Thyroid gland (tissue), 4 donors: ENCODE measurements at regions of chr13 and their contacts with region 1.

Region 1: GRCh38 chr13:41075034-41075433 is 13.7 kb downstream of the WBP4 start:
- DNase-seq: no peak
- H3K4me3 ChIP-seq: no peak overlapping the region
- H3K27ac ChIP-seq: no peak overlapping the region
- H3K4me1 ChIP-seq: no peaks in the 10 kb centered on the region
- H3K27me3 ChIP-seq: no peaks in the 10 kb centered on the region
- CTCF ChIP-seq: peak in 5 of 6 experiments; percentile 18 to 55 (median 46)
- POLR2A ChIP-seq: no peak

Region 2: DNA sequence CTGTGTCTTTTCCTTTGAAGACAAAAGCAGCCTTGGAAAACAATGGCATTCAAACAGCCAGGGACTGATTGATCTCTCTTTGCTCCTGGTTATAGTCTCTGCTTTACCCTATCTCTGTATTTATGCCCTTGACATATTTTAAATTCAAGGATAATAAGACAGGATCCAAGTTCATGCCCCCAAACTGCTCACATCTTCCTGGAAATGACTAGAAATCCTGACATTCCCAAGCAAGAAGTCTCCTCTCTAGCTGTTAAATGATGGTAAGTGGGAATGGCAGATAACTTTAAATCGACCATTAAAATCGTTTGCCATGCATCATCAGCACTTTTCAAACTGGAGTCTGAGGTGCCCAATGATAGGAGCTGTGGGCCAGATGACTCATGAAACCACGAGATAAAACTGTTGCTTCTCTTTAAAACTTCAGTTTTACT is 844.2 kb before region 1 on chr13:
- intact Hi-C with region 1: no loop called
- DNase-seq: no peak
- H3K4me3 ChIP-seq: no peak overlapping the region
- H3K27ac ChIP-seq: peak overlapping the region in 1 of 3 donors; percentile 4
- H3K4me1 ChIP-seq: peaks cover 0 to 9% of the 10 kb centered on the region in 2 donors
- H3K27me3 ChIP-seq: no peaks in the 10 kb centered on the region
- CTCF ChIP-seq: no peak
- POLR2A ChIP-seq: no peak

Region 3: GRCh38 chr13:40536443-40537113 is 538.5 kb before region 1 on chr13:
- intact Hi-C with region 1: no loop called
- DNase-seq: peak; percentile 48 to 74
- H3K4me3 ChIP-seq: no peak overlapping the region
- H3K27ac ChIP-seq: peak overlapping the region; percentile 21 to 69 (median 44)
- H3K4me1 ChIP-seq: peaks cover 3 to 14% of the 10 kb centered on the region in 2 donors
- H3K27me3 ChIP-seq: no peaks in the 10 kb centered on the region
- CTCF ChIP-seq: no peak
- POLR2A ChIP-seq: no peak

Region 4: GRCh38 chr13:40974460-40975407 is 100.3 kb before region 1 on chr13:
- intact Hi-C with region 1: no loop called
- DNase-seq: no peak
- H3K4me3 ChIP-seq: no peak overlapping the region
- H3K27ac ChIP-seq: peak overlapping the region in 1 of 3 donors; percentile 9
- H3K4me1 ChIP-seq: peaks cover 84 to 90% of the 10 kb centered on the region in 2 donors
- H3K27me3 ChIP-seq: no peaks in the 10 kb centered on the region
- CTCF ChIP-seq: peak in 4 of 6 experiments; percentile 36 to 50 (median 46)
- POLR2A ChIP-seq: no peak

Region 5: DNA sequence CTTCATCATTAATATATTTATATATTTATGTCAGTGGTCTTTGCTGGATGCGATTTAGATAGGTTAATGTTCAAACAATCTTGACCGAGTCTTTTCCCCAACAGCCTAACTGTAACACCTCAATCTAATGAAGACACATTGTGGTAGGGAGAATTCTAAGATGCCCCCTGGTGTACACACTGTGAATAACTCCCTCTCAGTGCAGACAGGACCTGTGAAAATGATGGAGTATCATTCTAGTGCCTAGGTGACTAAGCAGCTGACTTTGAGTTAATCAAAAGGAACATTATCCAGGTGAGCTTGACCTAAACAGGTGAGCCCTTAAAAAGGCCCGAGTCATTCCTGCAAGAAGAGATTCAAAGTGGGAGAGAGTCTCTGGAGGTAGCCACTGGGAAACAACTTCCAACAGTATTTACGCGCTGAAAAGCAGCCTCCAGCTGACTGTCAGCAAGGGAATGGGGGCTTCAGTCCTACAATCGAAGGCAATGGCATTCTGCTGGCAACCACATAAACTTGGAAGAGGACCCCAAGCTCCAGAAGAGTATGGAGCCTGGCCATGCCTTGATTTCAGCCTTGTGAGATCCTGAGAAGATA is 147.3 kb after region 1 on chr13:
- intact Hi-C with region 1: loop called (anchors 5 kb)
- DNase-seq: peak; percentile 25 to 33
- H3K4me3 ChIP-seq: no peak overlapping the region
- H3K27ac ChIP-seq: no peak overlapping the region
- H3K4me1 ChIP-seq: no peaks in the 10 kb centered on the region
- H3K27me3 ChIP-seq: no peaks in the 10 kb centered on the region
- CTCF ChIP-seq: peak in 5 of 6 experiments; percentile 49 to 72 (median 58)
- POLR2A ChIP-seq: no peak